ENCODE measurements at regions of chr5 and their contacts with region 1.

Region 1: DNA sequence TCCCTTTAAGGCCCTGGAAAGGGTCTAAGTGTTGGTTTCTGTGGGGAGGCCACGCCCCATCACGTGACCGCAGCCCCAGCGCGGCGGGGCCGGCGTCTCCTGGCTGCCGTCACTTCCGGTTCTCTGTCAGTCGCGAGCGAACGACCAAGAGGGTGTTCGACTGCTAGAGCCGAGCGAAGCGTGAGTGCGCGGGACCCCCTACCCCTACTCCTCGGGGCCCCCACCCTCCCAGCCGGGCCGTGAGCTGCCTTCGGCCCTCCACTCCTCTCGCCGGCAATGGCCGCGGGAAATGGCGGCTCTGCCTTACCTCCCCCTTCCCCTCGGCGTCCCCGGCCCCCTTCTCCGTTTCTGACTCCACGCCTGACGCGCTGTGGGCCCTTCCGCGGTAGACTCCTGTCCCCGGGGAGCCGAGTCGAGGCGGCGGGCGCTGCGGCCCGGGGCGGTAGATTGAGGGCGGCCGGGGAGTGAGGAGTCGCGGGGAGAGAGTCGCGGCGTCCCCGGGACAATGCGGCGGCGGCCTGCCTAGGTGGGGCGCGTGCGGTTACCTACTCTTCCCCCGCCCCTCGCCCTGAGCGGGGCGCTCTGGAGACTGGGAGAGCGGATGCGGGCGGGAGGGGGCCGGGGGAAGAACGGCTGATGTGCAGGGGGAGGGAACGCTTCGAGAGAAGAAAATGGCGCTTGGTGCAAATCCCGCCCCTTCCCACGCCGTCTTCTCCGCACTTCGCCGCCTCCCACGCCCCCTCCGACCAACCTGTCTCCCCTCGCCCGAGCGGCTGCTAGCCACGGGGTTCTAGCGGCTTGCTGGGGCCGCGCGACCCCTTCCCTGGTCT is at the start of gene SUB1:
- DNase-seq: peak; percentile 96
- H3K4me3 ChIP-seq: peak within 1 kb of the TSS; percentile 90
- H3K27ac ChIP-seq: peak within 1 kb of the TSS; percentile 99
- H3K4me1 ChIP-seq: peaks cover 17% of the 10 kb centered on the region
- H3K27me3 ChIP-seq: no peaks in the 10 kb centered on the region
- CTCF ChIP-seq: peak; percentile 27; the same call in 1 of the 2 replicates
- total RNA-seq, gene SUB1: 324 and 331 TPM in 2 replicates

Region 2: DNA sequence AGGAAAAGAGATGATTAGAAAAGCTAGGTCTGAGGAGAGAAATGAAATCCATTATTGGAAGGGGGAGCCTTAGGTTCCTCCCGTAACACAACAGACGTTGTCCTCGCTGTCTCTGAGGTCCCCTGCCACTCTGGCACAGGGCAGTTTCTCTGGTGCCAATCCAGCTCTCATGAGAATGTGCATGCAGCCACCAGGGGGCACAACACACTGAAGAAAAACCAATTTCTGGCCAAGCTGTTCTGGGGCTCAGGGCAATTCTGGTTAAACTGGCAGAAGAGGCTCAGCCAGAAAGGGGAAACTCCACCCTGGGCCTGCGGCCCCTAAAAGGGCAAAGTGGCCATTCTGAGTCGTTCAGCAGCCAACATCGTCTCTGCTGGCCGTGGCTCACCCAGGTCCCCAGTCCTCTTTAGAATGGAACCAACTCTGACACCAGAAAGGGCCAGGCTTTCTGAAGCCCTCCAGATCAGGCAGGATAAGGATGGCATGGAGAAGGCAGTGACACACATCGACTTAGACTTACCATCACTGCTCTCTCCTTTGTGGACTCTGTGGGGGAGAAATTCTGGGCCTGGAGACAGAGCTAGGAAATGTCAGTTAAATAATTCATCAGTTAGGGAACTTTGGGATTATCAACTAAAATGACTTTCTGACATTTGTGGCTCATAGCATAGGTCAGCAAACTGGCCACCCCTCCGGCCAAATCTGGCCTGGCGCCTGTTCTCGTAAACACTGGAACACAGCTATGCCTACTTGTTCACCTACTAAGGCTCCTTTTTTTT is 353.0 kb before region 1 on chr5:
- CTCF ChIA-PET with region 1: interaction called, 13 read pairs
- POLR2A ChIA-PET with region 1: no interaction called
- intact Hi-C with region 1: no loop called
- DNase-seq: peak; percentile 76
- H3K4me3 ChIP-seq: no peak overlapping the region
- H3K27ac ChIP-seq: no peak overlapping the region
- H3K4me1 ChIP-seq: no peaks in the 10 kb centered on the region
- H3K27me3 ChIP-seq: no peaks in the 10 kb centered on the region
- CTCF ChIP-seq: peak; percentile 89

Region 3: GRCh38 chr5:32406650-32407049 is 179.0 kb before region 1 on chr5:
- CTCF ChIA-PET with region 1: no interaction called
- POLR2A ChIA-PET with region 1: no interaction called
- intact Hi-C with region 1: no loop called
- DNase-seq: no peak
- H3K4me3 ChIP-seq: no peak overlapping the region
- H3K27ac ChIP-seq: no peak overlapping the region
- H3K4me1 ChIP-seq: no peaks in the 10 kb centered on the region
- H3K27me3 ChIP-seq: no peaks in the 10 kb centered on the region
- CTCF ChIP-seq: no peak

Region 4: GRCh38 chr5:32444431-32445286 is 141.0 kb before region 1 on chr5 and contains the start of gene ZFR:
- CTCF ChIA-PET with region 1: no interaction called
- POLR2A ChIA-PET with region 1: interaction called, 15 read pairs
- intact Hi-C with region 1: no loop called
- DNase-seq: peak; percentile 94
- H3K4me3 ChIP-seq: peak within 1 kb of the TSS; percentile 94
- H3K27ac ChIP-seq: peak within 1 kb of the TSS; percentile 90
- H3K4me1 ChIP-seq: peaks cover 13% of the 10 kb centered on the region
- H3K27me3 ChIP-seq: no peaks in the 10 kb centered on the region
- CTCF ChIP-seq: no peak
- total RNA-seq, gene ZFR: 104 and 110 TPM in 2 replicates

Region 5: GRCh38 chr5:32489791-32490582 is 95.7 kb before region 1 on chr5:
- CTCF ChIA-PET with region 1: interaction called, 52 read pairs
- POLR2A ChIA-PET with region 1: no interaction called
- intact Hi-C with region 1: loop called (anchors 1 kb)
- DNase-seq: peak; percentile 89
- H3K4me3 ChIP-seq: no peak overlapping the region
- H3K27ac ChIP-seq: no peak overlapping the region
- H3K4me1 ChIP-seq: peaks cover 6% of the 10 kb centered on the region
- H3K27me3 ChIP-seq: no peaks in the 10 kb centered on the region
- CTCF ChIP-seq: peak; percentile 84

Region 6: DNA sequence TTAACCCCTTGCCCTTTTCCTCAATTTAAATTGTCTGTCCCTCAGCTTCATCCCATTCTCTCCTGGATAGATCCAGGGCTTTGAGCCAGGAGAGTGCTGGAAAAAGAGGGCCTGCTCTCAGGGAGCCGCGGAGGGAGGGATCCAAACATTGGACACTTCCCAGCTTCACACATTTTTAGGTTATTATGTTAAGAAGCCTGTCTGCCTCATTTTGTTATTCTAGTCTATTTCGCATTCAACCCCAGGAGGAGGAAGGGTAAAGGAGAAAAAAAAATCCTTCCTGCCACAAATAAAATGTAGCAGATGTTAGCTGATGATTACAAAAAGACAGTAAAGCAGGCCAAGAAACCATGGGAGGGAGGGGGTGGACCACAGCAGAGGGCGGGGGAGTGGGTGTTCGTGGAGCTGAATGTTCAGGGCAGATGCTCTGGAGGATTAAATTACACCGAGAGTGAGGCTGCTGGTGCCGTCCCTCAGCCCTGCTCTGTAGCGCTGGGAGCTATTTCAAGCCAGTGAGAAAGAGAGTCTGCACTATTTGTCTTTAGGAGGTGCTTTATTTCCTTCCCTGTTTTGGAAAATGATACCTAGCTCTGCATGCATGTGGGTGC is 80.6 kb before region 1 on chr5:
- CTCF ChIA-PET with region 1: no interaction called
- POLR2A ChIA-PET with region 1: no interaction called
- intact Hi-C with region 1: loop called (anchors 5 kb)
- DNase-seq: peak; percentile 89
- H3K4me3 ChIP-seq: no peak overlapping the region
- H3K27ac ChIP-seq: peak overlapping the region; percentile 38
- H3K4me1 ChIP-seq: peaks cover 28% of the 10 kb centered on the region
- H3K27me3 ChIP-seq: no peaks in the 10 kb centered on the region
- CTCF ChIP-seq: no peak

Region 7: GRCh38 chr5:32542216-32543059 is 43.2 kb before region 1 on chr5:
- CTCF ChIA-PET with region 1: no interaction called
- POLR2A ChIA-PET with region 1: no interaction called
- intact Hi-C with region 1: no loop called
- DNase-seq: no peak
- H3K4me3 ChIP-seq: no peak overlapping the region
- H3K27ac ChIP-seq: no peak overlapping the region
- H3K4me1 ChIP-seq: peaks cover 4% of the 10 kb centered on the region
- H3K27me3 ChIP-seq: no peaks in the 10 kb centered on the region
- CTCF ChIP-seq: no peak

Region 8: DNA sequence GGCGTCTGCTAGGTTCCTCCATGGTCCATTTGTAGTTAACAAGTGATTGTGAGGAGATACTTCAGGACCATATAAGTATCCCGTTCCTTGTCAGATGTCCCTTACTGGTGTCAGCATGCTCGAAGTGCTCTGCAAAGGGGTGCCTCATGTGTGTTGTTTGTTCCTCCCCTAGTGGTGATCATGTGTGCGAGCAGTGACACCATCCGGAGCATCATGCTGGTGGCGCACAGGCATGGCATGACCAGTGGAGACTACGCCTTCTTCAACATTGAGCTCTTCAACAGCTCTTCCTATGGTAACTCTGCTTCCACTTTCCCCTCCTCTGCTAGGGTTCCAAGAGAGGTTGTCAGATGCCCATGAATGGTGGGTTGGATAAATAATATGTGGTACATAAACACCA is 138.9 kb after region 1 on chr5:
- CTCF ChIA-PET with region 1: no interaction called
- POLR2A ChIA-PET with region 1: no interaction called
- intact Hi-C with region 1: no loop called
- DNase-seq: no peak
- H3K4me3 ChIP-seq: no peak overlapping the region
- H3K27ac ChIP-seq: no peak overlapping the region
- H3K4me1 ChIP-seq: no peaks in the 10 kb centered on the region
- H3K27me3 ChIP-seq: no peaks in the 10 kb centered on the region
- CTCF ChIP-seq: no peak